ENCODE measurements at regions of chr14 and their contacts with region 1.

Region 1: DNA sequence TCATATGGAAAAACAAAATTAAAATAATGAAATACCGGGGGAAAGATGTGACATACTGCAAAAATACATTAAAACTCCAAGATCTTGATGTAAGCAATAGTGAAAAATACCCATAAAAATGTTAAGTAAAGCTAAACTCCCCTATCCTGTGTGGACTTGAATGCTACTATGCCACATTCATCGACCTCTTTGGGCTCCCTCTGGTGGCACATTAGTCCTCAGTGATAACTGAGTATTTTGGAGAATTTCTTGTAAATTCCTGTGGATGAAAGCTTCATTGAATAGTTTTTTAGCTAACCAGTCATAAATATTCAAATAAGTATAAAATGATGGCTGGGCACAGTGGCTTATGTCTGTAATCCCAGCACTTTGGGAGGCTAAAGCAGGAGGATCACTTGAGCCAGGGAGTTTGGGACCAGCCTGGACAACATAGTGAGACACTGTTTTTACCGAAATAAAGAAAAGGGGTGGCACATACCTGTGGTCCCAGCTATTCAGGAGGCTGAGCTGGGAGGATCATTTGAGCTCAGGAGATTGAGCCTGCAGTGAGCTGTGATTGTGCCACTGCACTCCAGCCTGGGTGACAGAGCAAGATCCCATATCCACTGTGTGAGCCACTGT is 42.4 kb upstream of the SGPP1 start:
- DNase-seq: peak in 3 of 5 donors; percentile 25 to 43 (median 26)
- ATAC-seq: peak in 2 of 4 donors; percentile 59 to 62
- H3K4me3 ChIP-seq: no peak overlapping the region
- H3K27ac ChIP-seq: no peak overlapping the region
- H3K4me1 ChIP-seq: no peaks in the 10 kb centered on the region
- H3K27me3 ChIP-seq: no peaks in the 10 kb centered on the region
- CTCF ChIP-seq: peak; percentile 30 to 67 (median 57)
- POLR2A ChIP-seq: no peak

Region 2: DNA sequence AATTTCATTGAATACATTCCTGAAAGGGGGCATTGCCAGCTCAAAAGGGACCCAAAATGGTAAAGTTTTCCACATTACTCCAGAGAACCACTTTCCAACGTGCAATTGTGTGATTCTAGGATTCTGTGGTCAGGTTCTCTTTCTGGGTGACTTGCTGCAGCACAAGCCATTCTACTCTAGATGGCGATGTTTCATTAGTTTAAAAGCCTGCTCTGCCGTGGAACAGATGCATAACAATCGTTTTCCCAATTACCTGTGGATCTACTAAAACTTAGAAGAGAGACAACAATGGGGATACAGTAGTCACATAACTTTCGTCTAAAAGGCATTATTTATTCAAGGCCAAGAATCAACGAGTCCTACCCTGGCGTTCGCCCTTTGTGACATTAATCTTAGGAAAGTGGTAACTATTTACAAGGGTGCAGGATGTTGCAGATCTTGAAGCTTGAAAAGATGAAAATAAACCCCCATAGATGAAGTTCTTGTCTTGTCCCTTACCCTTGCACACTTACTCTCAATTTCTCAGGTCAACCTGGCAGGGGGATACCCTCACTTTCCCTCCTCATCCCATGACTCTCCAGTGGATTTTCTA is 1607.2 kb before region 1 on chr14:
- intact Hi-C with region 1: loop called in 1 of 10 experiments (anchors 10 kb)
- DNase-seq: no peak
- ATAC-seq: peak in 2 of 4 donors; percentile 47 to 57
- H3K4me3 ChIP-seq: no peak overlapping the region
- H3K27ac ChIP-seq: no peak overlapping the region
- H3K4me1 ChIP-seq: no peaks in the 10 kb centered on the region
- H3K27me3 ChIP-seq: peaks cover 0 to 33% (median 0%) of the 10 kb centered on the region in 9 donors
- CTCF ChIP-seq: peak; percentile 44 to 76 (median 62)
- POLR2A ChIP-seq: no peak

Region 3: GRCh38 chr14:63632932-63633514 is 137.3 kb before region 1 on chr14:
- intact Hi-C with region 1: loop called in 1 of 10 experiments (anchors 10 kb)
- DNase-seq: no peak
- ATAC-seq: no peak
- H3K4me3 ChIP-seq: no peak overlapping the region
- H3K27ac ChIP-seq: no peak overlapping the region
- H3K4me1 ChIP-seq: no peaks in the 10 kb centered on the region
- H3K27me3 ChIP-seq: no peaks in the 10 kb centered on the region
- CTCF ChIP-seq: peak in 11 of 12 donors; percentile 15 to 49 (median 36)
- POLR2A ChIP-seq: no peak

Region 4: GRCh38 chr14:63641473-63642228 is 128.6 kb before region 1 on chr14 and contains the start of gene WDR89:
- intact Hi-C with region 1: loop called in 3 of 10 experiments (anchors 10 kb)
- DNase-seq: peak; percentile 97 to 98 (median 98)
- ATAC-seq: peak; percentile 98 to 99 (median 98)
- H3K4me3 ChIP-seq: peak within 1 kb of the TSS; percentile 35 to 82 (median 70)
- H3K27ac ChIP-seq: peak within 1 kb of the TSS; percentile 84 to 96 (median 92)
- H3K4me1 ChIP-seq: peaks cover 0 to 28% (median 10%) of the 10 kb centered on the region in 12 donors
- H3K27me3 ChIP-seq: no peaks in the 10 kb centered on the region
- CTCF ChIP-seq: peak; percentile 50 to 77 (median 68)
- POLR2A ChIP-seq: peak in 1 of 2 donors; percentile 44
- total RNA-seq, gene WDR89: 3.3 to 7.6 (median 6.3) TPM

Region 5: GRCh38 chr14:63727774-63728728 is 42.2 kb before region 1 on chr14 and contains the start of gene SGPP1:
- intact Hi-C with region 1: loop called in 2 of 10 experiments (anchors 2 to 5 kb)
- DNase-seq: peak; percentile 82 to 90 (median 84)
- ATAC-seq: peak; percentile 86 to 97 (median 96)
- H3K4me3 ChIP-seq: peak within 1 kb of the TSS; percentile 82 to 99 (median 96)
- H3K27ac ChIP-seq: peak within 1 kb of the TSS; percentile 58 to 94 (median 90)
- H3K4me1 ChIP-seq: peaks cover 0 to 40% (median 16%) of the 10 kb centered on the region in 12 donors
- H3K27me3 ChIP-seq: no peaks in the 10 kb centered on the region
- CTCF ChIP-seq: peak; percentile 19 to 61 (median 45)
- POLR2A ChIP-seq: peak in 1 of 2 donors; percentile 56
- total RNA-seq, gene SGPP1: 4.3 to 9.2 (median 5.1) TPM